PC-9 (cell line): ENCODE measurements at regions of chr15 and their contacts with region 1.

Region 1: DNA sequence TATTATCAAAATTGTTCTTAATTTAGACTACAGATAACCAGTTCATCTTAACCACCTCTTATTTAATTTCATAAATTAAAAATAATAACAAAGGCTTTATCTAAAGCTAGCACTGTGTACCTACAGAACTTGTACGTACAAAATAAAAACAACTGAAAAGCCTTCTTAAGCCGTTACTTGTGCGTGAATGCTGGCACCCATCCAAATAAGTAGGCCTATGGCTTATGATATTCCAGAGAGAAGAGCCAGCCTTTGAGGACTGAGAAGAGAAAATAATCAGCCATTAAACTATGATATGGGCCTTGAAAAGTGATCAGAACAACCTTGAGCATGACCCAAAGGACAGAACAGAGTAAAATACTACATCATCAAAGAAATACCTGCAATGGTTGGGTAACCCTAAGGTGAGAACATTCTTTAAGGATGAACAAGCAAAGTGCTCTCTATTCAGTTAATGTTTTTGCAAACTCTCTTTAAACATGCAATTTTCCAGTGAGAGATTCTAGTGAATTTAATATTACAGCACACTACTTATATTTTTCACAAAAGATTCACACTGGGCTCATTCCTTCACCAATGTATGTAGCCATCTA is 7.5 kb upstream of the ACTC1 start:
- DNase-seq: no peak
- H3K4me3 ChIP-seq: no peak overlapping the region
- H3K27ac ChIP-seq: no peak overlapping the region
- H3K4me1 ChIP-seq: no peaks in the 10 kb centered on the region
- H3K27me3 ChIP-seq: no peaks in the 10 kb centered on the region
- CTCF ChIP-seq: no peak

Region 2: GRCh38 chr15:34837246-34838016 is 34.5 kb after region 1 on chr15:
- CTCF ChIA-PET with region 1: no interaction called
- POLR2A ChIA-PET with region 1: interaction called, 21 read pairs
- intact Hi-C with region 1: no loop called
- DNase-seq: peak in 1 of 2 experiments; percentile 51
- H3K4me3 ChIP-seq: no peak overlapping the region
- H3K27ac ChIP-seq: no peak overlapping the region
- H3K4me1 ChIP-seq: no peaks in the 10 kb centered on the region
- H3K27me3 ChIP-seq: no peaks in the 10 kb centered on the region
- CTCF ChIP-seq: no peak

Region 3: DNA sequence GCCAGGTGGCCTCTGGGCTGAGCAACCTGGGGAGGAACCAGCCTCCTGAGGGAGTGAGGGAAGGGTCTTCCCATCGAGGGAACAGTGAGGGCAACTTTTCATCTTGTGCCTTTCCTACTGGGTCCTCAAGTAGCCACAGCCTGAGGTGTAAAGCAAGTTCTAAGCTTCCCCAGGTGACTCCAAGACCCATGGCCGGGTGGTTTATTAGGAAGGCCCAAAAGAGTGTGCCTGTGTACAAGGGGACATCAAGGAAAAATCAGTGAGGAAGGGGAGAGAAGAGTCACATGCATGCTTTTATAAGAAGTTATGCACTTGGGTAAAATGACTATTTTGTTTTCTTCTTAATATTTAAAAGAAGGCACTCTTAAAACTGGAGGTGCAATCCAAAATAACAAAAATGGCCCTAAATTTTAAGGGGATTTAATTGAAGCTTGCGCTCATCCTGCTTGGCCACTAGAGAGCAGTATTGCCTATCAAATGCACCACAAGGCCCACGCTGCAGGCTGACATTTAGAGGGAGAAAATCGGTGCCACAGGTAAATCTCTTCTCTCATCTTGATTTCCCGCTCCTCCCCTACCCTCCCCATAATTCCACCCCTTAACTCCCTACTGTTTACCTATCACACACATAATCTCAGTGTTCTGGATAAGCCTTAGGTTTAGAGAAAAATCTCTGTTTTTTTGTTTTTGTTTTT is 275.5 kb after region 1 on chr15:
- CTCF ChIA-PET with region 1: no interaction called
- POLR2A ChIA-PET with region 1: no interaction called
- intact Hi-C with region 1: no loop called
- DNase-seq: peak in 1 of 2 experiments; percentile 29
- H3K4me3 ChIP-seq: no peak overlapping the region
- H3K27ac ChIP-seq: no peak overlapping the region
- H3K4me1 ChIP-seq: no peaks in the 10 kb centered on the region
- H3K27me3 ChIP-seq: no peaks in the 10 kb centered on the region
- CTCF ChIP-seq: peak; percentile 86

Region 4: DNA sequence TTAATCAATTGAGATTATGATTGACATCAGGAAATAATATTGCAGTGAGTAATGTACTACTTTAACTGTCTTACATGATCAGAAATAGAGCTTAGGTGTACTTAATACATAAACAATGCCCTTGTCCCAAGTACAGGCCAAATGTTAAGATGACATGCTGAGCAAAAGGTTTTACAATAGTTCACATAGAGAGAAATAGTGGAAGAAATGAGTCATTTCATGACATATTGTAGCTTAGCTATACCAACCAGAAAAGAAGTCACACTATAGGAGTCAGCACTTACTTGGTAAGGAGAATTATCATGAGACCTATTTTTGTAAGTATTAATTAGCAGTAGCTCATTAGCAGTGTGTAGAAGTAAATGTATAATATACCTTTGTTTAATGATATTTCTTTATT is 378.6 kb after region 1 on chr15:
- CTCF ChIA-PET with region 1: no interaction called
- POLR2A ChIA-PET with region 1: interaction called, 12 read pairs
- intact Hi-C with region 1: no loop called
- DNase-seq: no peak
- H3K4me3 ChIP-seq: no peak overlapping the region
- H3K27ac ChIP-seq: no peak overlapping the region
- H3K4me1 ChIP-seq: no peaks in the 10 kb centered on the region
- H3K27me3 ChIP-seq: no peaks in the 10 kb centered on the region
- CTCF ChIP-seq: no peak